Activated CD4-positive, alpha-beta T cell treated with anti-CD3 and anti-CD28 coated beads, Interleukin-2, amount 10 ng/mL, durations not matched to agents 7 days and 5 days (primary cell): ENCODE measurements at regions of chr17 and their contacts with region 1.

Region 1: GRCh38 chr17:16584273-16584995 is 15.4 kb upstream of the ZNF287 start:
- DNase-seq: peak; percentile 90
- H3K4me3 Mint-ChIP-seq: peak overlapping the region; percentile 66
- H3K27ac Mint-ChIP-seq: no peak overlapping the region
- H3K4me1 Mint-ChIP-seq: peaks cover 22% of the 10 kb centered on the region
- H3K27me3 Mint-ChIP-seq: peaks cover 41% of the 10 kb centered on the region

Region 2: DNA sequence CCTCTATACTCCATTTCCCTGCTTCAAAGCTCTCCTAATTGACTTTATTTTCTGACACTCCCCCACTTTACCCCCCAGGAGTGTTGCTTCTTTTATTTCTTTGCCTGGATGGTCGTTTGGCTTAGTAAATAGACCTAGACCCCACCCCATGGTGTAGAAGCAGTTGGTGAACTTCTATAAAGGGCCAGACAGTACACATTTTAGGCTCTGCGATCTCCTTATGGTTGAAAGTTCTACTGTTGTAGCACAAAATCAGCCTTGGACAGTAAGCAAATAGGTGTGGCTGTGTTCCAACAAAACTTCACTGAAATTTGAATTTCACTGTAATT is 47.3 kb before region 1 on chr17:
- CTCF ChIA-PET with region 1: interaction called, 19 read pairs
- POLR2A ChIA-PET with region 1: interaction called, 5 read pairs
- DNase-seq: no peak
- H3K4me3 Mint-ChIP-seq: peak overlapping the region; percentile 87
- H3K27ac Mint-ChIP-seq: no peak overlapping the region
- H3K4me1 Mint-ChIP-seq: peaks cover 24% of the 10 kb centered on the region
- H3K27me3 Mint-ChIP-seq: peaks cover 2% of the 10 kb centered on the region

Region 3: DNA sequence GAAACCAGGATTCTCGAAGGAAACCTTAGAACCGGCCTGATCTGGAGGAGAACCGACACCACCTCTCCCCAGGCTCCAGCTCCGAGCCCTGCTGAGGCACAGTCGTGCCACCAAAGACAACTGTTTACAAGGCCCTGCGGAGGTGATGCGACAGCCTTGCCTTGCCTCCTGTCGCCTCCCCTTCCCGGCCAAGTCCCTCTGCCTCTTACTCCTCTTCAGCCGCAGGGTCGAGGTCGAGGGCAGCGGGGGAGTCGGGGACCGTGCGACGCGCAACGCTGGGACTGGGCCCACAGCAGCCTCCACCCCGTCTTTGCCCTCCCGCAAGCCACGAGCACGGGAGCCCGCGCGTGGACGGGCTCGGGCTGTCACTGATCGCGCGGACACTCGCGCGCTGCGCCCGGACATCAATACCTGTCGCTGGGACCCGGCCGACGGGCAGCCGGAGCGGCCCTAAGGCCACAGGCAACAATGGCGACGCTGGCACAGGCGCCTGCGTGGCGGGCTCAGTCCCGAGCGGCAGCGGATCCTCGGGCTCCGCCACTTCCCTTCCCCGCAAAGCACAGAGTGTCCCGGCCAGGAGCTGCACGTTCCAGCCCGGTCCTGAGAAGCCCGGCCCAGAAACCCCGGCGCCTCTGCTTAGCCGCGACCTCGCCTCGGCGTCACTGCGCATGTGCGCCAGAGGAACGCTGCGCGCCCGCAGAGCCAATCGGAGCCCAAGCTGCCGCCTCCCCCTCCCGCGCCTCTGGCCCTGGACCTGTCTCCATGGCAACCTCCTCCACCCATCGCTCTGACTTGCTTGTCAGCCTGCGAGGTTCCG is 15.7 kb before region 1 on chr17 and contains the start of gene ZNF287:
- CTCF ChIA-PET with region 1: interaction called, 15 read pairs
- POLR2A ChIA-PET with region 1: no interaction called
- DNase-seq: peak; percentile 94
- H3K4me3 Mint-ChIP-seq: peak within 1 kb of the TSS; percentile 81
- H3K27ac Mint-ChIP-seq: peak within 1 kb of the TSS; percentile 74
- H3K4me1 Mint-ChIP-seq: peaks cover 19% of the 10 kb centered on the region
- H3K27me3 Mint-ChIP-seq: peaks cover 2% of the 10 kb centered on the region
- total RNA-seq, gene ZNF287: 5.7 to 6.1 TPM

Region 4: DNA sequence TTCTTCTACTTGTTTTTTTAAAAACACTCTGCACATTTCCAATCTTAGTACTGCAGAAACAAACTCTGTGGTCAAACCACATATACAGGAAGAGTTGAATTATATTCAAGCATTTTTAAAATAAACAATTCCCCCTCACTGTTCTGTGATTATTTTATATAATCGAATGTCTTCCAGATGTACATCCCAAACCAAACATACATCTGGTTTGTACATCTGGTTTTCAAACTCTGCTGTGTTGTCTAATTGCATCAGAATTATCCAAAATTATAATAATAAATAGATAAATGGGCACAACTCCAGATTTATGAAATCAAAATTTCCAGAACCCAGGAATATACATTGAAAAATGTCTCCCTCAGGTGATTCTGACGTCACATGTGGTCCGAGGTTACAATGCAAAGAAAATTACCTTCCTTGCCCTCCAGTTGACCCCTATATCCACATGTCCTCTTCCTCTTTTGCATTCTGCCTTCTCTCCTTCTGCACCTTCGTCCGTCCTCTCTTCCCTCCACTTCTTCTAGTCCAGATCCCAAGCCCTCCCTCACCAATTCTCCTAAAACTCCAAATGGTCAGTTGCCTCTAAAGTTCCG is 92.3 kb after region 1 on chr17:
- CTCF ChIA-PET with region 1: no interaction called
- POLR2A ChIA-PET with region 1: no interaction called
- DNase-seq: no peak
- H3K4me3 Mint-ChIP-seq: no peak overlapping the region
- H3K27ac Mint-ChIP-seq: no peak overlapping the region
- H3K4me1 Mint-ChIP-seq: no peaks in the 10 kb centered on the region
- H3K27me3 Mint-ChIP-seq: peaks cover 7% of the 10 kb centered on the region